Activated T-helper 2 cell treated with anti-CD3 and anti-CD28 coated beads, Interferon-gamma antibody, Interleukin-2, Interleukin-4, amounts not matched to agents 10 μg/mL and 5 μg/mL and 100 μg/mL, durations not matched to agents 14 hours and 24 hours and 36 hours (primary cell): ENCODE measurements at regions of chr2 and their contacts with region 1.

Region 1: GRCh38 chr2:40642237-40642636 is 190.3 kb upstream of the SLC8A1 start:
- DNase-seq: no peak
- H3K4me3 Mint-ChIP-seq: no peak overlapping the region
- H3K27ac Mint-ChIP-seq: no peak overlapping the region
- H3K4me1 Mint-ChIP-seq: no peaks in the 10 kb centered on the region
- H3K27me3 Mint-ChIP-seq: no peaks in the 10 kb centered on the region

Region 2: DNA sequence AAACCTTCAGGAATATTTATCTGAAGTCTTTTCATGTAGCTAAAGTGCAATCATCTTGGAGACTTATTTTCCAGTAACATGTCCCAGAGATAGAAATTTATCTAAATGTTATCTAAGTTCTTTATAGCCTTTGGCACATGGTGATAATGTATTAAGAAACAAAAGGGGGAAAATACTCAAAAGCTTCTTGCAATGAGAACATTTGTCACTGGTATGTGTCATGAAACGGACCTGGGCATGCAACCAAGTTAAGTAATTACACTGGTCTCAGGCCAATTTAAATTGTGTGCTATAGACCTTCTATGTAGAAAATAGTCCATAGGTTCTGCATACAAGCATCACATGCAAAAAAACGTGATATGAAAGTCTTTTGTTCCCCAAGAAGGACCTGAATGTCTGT is 326.6 kb before region 1 on chr2:
- intact Hi-C with region 1: loop called (anchors 5 kb)
- DNase-seq: no peak
- H3K4me3 Mint-ChIP-seq: no peak overlapping the region
- H3K27ac Mint-ChIP-seq: no peak overlapping the region
- H3K4me1 Mint-ChIP-seq: no peaks in the 10 kb centered on the region
- H3K27me3 Mint-ChIP-seq: no peaks in the 10 kb centered on the region

Region 3: DNA sequence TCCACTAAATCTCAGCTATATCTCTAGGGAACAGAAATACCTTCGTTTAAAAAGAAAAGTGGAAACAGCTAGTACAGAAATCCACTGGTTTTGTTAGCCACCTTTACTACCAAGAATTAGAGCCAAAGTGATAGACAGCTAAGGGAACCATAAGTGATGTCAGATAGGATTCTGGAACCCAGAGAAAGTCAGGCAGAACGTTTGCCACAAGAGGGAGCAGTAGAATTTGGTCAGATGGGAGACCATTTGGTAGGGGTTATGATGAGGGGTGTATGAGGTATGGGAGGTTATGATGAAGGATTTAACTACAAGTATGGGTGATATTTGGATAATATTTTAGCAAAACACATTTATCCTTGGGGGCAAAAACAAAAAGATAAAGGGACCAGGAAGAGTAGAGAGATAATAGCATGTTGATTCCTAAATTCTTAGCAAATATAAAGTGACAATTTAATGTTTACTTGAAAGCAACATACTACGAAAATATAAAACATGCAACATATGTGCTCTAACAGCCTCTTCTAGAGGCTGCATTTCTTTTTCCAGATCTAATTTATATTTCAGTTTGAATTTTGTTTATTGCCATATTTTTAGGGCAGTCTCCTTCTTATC is 193.7 kb before region 1 on chr2:
- intact Hi-C with region 1: no loop called
- DNase-seq: no peak
- H3K4me3 Mint-ChIP-seq: no peak overlapping the region
- H3K27ac Mint-ChIP-seq: no peak overlapping the region
- H3K4me1 Mint-ChIP-seq: peaks cover 25% of the 10 kb centered on the region
- H3K27me3 Mint-ChIP-seq: peaks cover 38% of the 10 kb centered on the region

Region 4: GRCh38 chr2:40629768-40630434 is 12.3 kb before region 1 on chr2:
- intact Hi-C with region 1: no loop called
- DNase-seq: no peak
- H3K4me3 Mint-ChIP-seq: no peak overlapping the region
- H3K27ac Mint-ChIP-seq: no peak overlapping the region
- H3K4me1 Mint-ChIP-seq: no peaks in the 10 kb centered on the region
- H3K27me3 Mint-ChIP-seq: no peaks in the 10 kb centered on the region

Region 5: DNA sequence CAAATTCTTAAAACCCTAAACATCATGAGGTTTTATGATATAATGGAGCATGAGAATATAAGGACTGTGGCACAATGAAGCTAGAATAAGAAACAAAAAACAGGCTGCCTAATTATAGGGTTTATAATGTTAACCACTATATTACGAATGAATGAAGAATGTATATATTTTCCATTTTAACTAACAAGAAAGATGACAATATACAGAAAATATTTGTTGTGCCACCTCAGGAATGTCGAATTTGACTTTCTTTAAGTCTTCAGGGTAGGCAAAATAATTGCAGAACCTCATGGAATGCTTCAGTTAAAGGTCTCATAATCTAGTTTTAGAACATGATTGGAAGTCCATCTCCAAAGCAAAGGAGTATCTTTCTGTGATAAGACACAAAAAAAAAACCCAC is 92.6 kb after region 1 on chr2:
- intact Hi-C with region 1: no loop called
- DNase-seq: no peak
- H3K4me3 Mint-ChIP-seq: no peak overlapping the region
- H3K27ac Mint-ChIP-seq: no peak overlapping the region
- H3K4me1 Mint-ChIP-seq: no peaks in the 10 kb centered on the region
- H3K27me3 Mint-ChIP-seq: no peaks in the 10 kb centered on the region

Region 6: GRCh38 chr2:41068740-41069139 is 426.5 kb after region 1 on chr2:
- intact Hi-C with region 1: no loop called
- DNase-seq: no peak
- H3K4me3 Mint-ChIP-seq: no peak overlapping the region
- H3K27ac Mint-ChIP-seq: no peak overlapping the region
- H3K4me1 Mint-ChIP-seq: no peaks in the 10 kb centered on the region
- H3K27me3 Mint-ChIP-seq: no peaks in the 10 kb centered on the region